Activated T-helper 2 cell treated with anti-CD3 and anti-CD28 coated beads, Interferon-gamma antibody, Interleukin-2, Interleukin-4, amounts not matched to agents 10 μg/mL and 5 μg/mL and 100 μg/mL, durations not matched to agents 14 hours and 24 hours and 36 hours (primary cell): ENCODE measurements at regions of chr1 and their contacts with region 1.

Region 1: DNA sequence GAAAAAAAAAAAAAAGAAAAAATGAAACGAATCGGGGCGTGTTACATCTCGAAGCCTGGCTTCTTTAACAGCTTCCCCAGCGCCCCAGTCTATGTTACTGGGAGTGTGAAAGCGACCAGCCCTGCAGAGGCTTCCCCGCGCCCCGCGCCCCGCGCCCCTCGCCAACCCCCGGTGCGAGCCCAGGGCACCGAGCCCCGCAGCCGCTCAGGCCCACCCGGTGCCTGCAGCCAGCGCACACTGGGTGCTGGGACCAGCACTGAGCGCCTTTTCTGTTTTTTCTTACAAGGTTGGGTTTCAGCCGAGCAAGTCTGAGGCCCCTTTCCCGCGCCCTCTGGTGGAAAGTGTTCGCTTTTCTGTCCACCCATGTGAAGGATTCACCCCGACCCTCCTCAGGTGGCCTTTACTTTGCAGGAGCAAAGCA is 42.1 kb upstream of the ZNF496 start:
- DNase-seq: peak; percentile 44
- H3K4me3 Mint-ChIP-seq: no peak overlapping the region
- H3K27ac Mint-ChIP-seq: no peak overlapping the region
- H3K4me1 Mint-ChIP-seq: no peaks in the 10 kb centered on the region
- H3K27me3 Mint-ChIP-seq: peaks cover 14% of the 10 kb centered on the region

Region 2: GRCh38 chr1:247407180-247407616 is 33.5 kb after region 1 on chr1:
- intact Hi-C with region 1: no loop called
- DNase-seq: peak; percentile 53
- H3K4me3 Mint-ChIP-seq: peak overlapping the region; percentile 28
- H3K27ac Mint-ChIP-seq: peak overlapping the region; percentile 16
- H3K4me1 Mint-ChIP-seq: peaks cover 36% of the 10 kb centered on the region
- H3K27me3 Mint-ChIP-seq: peaks cover 35% of the 10 kb centered on the region

Region 3: GRCh38 chr1:247421074-247421473 is 47.3 kb after region 1 on chr1:
- intact Hi-C with region 1: no loop called
- DNase-seq: no peak
- H3K4me3 Mint-ChIP-seq: no peak overlapping the region
- H3K27ac Mint-ChIP-seq: no peak overlapping the region
- H3K4me1 Mint-ChIP-seq: peaks cover 19% of the 10 kb centered on the region
- H3K27me3 Mint-ChIP-seq: peaks cover 15% of the 10 kb centered on the region

Region 4: DNA sequence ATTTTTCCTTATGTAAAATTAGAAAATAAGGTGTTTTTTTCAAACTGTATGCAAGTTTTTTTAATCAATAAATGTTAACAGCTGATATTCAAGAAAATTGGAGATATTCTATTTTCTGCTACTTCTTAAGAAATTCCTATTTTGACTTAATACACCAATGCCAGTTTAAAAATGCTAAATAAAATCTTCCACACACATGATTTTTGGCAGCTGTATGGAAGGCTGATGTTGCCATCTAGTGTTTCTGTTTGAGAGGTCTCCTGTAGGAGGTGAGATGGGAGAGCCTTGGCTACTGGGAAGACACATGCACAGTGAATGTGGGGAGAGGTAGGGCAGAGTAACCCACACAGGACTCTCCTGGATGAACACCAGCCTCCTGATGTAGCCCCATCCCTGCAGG is 113.3 kb after region 1 on chr1:
- intact Hi-C with region 1: loop called (anchors 1 kb)
- DNase-seq: no peak
- H3K4me3 Mint-ChIP-seq: no peak overlapping the region
- H3K27ac Mint-ChIP-seq: no peak overlapping the region
- H3K4me1 Mint-ChIP-seq: no peaks in the 10 kb centered on the region
- H3K27me3 Mint-ChIP-seq: peaks cover 6% of the 10 kb centered on the region

Region 5: GRCh38 chr1:247576495-247576894 is 202.8 kb after region 1 on chr1:
- intact Hi-C with region 1: loop called (anchors 5 kb)
- DNase-seq: no peak
- H3K4me3 Mint-ChIP-seq: no peak overlapping the region
- H3K27ac Mint-ChIP-seq: no peak overlapping the region
- H3K4me1 Mint-ChIP-seq: no peaks in the 10 kb centered on the region
- H3K27me3 Mint-ChIP-seq: no peaks in the 10 kb centered on the region